Naive thymus-derived CD4-positive, alpha-beta T cell (primary cell): ENCODE measurements at regions of chr1 and their contacts with region 1.

Region 1: DNA sequence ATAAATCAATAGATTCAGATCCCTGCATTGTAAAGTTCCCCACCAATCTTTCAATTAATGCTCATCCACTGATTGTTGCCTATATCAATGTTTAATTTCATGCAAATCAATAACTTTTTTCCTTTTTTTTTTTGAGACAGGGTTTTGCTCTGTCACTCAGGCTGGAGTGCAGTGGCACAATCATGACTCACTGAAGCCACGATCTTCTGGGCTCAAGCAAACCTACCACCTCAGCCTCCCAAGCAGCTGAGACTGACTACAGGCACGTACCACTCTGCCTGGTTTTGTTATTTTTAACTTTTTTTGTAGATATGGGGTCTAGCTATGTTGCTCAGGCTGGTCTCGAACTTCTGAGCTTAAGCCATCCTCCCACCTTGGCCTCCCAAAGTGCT is 25.7 kb downstream of the DIO1 start:
- DNase-seq: no peak
- ATAC-seq: no peak
- H3K4me3 ChIP-seq: no peak overlapping the region
- H3K4me3 Mint-ChIP-seq: peak overlapping the region in 1 of 10 donors; percentile 59
- H3K27ac ChIP-seq: no peak overlapping the region
- H3K27ac Mint-ChIP-seq: peak overlapping the region; percentile 2 to 83 (median 67)
- H3K4me1 ChIP-seq: peaks cover 0 to 5% of the 10 kb centered on the region in 2 donors
- H3K4me1 Mint-ChIP-seq: peaks cover 7 to 44% (median 36%) of the 10 kb centered on the region in 7 donors
- H3K27me3 ChIP-seq: no peaks in the 10 kb centered on the region
- H3K27me3 Mint-ChIP-seq: no peaks in the 10 kb centered on the region

Region 2: DNA sequence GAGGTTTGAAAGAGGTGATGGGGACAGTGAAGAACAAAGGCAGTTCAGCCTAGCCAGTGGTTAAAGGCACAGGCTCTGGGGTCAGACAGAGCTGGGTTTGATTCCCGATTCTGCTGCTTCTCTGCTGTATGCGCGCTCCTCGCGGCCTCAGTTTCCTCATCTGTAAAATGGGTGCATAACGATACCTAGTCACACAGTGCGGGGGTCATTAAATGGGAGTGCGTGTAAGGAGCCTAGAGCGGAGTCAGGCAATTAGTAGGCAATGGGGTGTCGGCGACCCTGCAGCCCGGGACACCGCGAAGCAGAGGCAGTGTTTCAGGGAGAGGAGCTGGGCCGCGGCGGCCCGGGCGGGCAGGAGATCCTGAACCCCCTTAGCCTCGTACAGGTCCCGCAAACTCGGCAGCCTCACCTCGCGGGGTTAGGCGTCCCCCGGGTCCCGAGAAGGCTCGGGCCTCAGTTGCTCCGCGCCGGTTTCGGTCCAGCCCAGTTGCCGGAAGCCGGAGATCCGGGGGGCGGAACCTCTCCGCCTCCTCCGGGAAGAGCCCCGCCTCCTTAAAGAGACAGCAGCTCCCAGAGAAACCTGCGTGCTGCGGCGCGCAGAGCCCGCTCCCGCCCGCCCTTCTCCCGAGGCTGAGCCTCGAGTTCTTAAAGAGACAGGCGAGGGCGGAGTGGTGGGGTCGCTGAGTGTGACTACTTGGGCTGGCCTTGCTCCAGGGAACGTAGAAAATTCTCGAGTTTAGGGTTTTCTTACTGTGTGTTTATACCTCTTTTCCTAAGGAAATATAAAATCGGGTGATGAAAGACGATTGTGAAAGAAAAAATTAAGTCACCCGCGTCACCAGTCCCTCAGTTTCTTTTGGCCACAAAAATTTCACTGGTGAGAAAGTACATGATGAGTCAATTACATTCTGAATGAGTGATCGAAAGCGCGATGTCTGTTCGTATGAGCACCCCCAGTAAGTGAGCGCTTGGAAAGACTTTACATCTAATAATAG is 30.1 kb before region 1 on chr1 and contains the start of gene YIPF1:
- CTCF ChIA-PET with region 1: no interaction called
- POLR2A ChIA-PET with region 1: interaction called, 3 read pairs
- intact Hi-C with region 1: loop called in 1 of 2 experiments (anchors 2 kb)
- DNase-seq: peak; percentile 61 to 88 (median 85)
- ATAC-seq: peak; percentile 98
- H3K4me3 ChIP-seq: peak within 1 kb of the TSS; percentile 79
- H3K4me3 Mint-ChIP-seq: peak within 1 kb of the TSS; percentile 88 to 98 (median 96)
- H3K27ac ChIP-seq: peak within 1 kb of the TSS; percentile 75
- H3K27ac Mint-ChIP-seq: peak within 1 kb of the TSS; percentile 89 to 97 (median 95)
- H3K4me1 ChIP-seq: peaks cover 20 to 23% of the 10 kb centered on the region in 2 donors
- H3K4me1 Mint-ChIP-seq: peaks cover 26 to 55% (median 51%) of the 10 kb centered on the region in 7 donors
- H3K27me3 ChIP-seq: no peaks in the 10 kb centered on the region
- H3K27me3 Mint-ChIP-seq: peaks cover 0 to 2% (median 0%) of the 10 kb centered on the region in 5 donors
- total RNA-seq, gene YIPF1: 10.5 to 18.0 (median 16.3) TPM